GM12878 (cell line): ENCODE measurements at regions of chr17 and their contacts with region 1.

Region 1: DNA sequence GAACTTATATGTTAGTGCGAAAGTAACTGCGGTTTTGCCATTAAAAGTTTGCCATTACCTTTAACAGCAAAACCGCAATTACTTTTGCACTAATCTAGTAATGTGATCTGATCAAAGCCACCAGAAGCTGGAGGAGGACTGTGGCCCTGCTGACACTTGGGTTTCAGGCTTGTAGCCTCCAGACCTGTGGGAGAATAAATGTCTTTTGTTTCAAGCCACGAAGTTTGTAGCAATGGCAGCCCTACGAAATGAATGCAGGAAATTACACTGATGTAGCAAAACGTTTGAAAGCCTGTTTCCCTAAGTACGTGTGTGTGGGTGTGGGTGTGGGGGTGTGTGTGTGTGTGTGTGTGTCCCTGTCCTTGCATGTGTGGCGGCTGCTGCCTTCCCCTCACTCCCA is 66.6 kb downstream of the WSB1 start:
- DNase-seq: no peak
- ATAC-seq: no peak
- H3K4me3 ChIP-seq: no peak overlapping the region
- H3K27ac ChIP-seq: no peak overlapping the region
- H3K4me1 ChIP-seq: no peaks in the 10 kb centered on the region
- H3K27me3 ChIP-seq: no peaks in the 10 kb centered on the region
- CTCF ChIP-seq: no peak
- EP300 ChIP-seq: no peak
- POLR2A ChIP-seq: no peak
- RAD21 ChIP-seq: no peak

Region 2: GRCh38 chr17:27396941-27397340 is 36.4 kb after region 1 on chr17:
- CTCF ChIA-PET with region 1: no interaction called
- POLR2A ChIA-PET with region 1: no interaction called
- RAD21 ChIA-PET with region 1: no interaction called
- SMC1A ChIA-PET with region 1: no interaction called
- in situ Hi-C with region 1: loop called (anchors 5 kb)
- intact Hi-C with region 1: no loop called
- DNase-seq: no peak
- ATAC-seq: no peak
- H3K4me3 ChIP-seq: no peak overlapping the region
- H3K27ac ChIP-seq: no peak overlapping the region
- H3K4me1 ChIP-seq: no peaks in the 10 kb centered on the region
- H3K27me3 ChIP-seq: no peaks in the 10 kb centered on the region; a peak in 1 of 4 replicates
- CTCF ChIP-seq: no peak
- EP300 ChIP-seq: no peak
- POLR2A ChIP-seq: no peak
- RAD21 ChIP-seq: no peak